ENCODE measurements at regions of chr22 and their contacts with region 1.

Region 1: DNA sequence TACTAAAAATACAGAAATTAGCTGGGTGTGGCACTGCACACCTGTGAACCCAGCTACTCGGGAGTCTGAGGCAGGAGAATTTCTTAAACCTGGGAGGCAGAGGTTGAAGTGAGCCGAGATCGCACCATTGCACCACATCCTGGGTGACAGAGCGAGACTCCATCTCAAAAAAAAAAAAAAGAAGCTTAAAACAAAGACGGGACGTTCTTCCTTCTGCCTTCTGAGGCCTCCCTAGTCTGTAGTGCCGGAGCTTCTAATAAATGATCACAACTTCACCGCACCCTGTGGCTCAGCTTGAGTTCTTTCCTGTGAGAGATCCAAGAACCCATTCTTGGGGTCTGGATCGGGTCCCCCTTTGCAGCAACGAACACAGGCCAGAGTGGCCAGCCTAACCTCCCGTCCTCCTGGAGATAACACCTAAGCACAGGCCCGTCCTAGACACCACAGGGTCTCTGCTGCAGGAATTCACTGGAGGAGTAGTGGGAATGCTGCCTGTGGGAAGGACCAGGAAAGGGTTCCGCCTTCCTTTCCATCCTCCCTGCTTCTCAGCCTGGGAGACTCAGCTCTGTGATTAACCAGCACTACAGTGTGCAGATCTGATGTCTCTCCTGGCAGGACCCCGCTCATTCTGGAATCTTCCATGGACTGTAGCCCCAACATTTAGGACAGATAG is 2.2 kb upstream of the APOBEC3H start:
- DNase-seq: peak in 4 of 5 donors; percentile 36 to 75 (median 60)
- H3K4me3 ChIP-seq: peak overlapping the region; percentile 42
- H3K4me3 Mint-ChIP-seq: peak overlapping the region; percentile 56 to 80 (median 69)
- H3K27ac ChIP-seq: peak overlapping the region; percentile 43
- H3K27ac Mint-ChIP-seq: peak overlapping the region; percentile 92 to 99 (median 96)
- H3K4me1 ChIP-seq: peaks cover 96% of the 10 kb centered on the region
- H3K4me1 Mint-ChIP-seq: peaks cover 87 to 99% (median 94%) of the 10 kb centered on the region in 3 donors
- H3K27me3 ChIP-seq: no peaks in the 10 kb centered on the region
- H3K27me3 Mint-ChIP-seq: peaks cover 0 to 5% of the 10 kb centered on the region in 2 donors

Region 2: DNA sequence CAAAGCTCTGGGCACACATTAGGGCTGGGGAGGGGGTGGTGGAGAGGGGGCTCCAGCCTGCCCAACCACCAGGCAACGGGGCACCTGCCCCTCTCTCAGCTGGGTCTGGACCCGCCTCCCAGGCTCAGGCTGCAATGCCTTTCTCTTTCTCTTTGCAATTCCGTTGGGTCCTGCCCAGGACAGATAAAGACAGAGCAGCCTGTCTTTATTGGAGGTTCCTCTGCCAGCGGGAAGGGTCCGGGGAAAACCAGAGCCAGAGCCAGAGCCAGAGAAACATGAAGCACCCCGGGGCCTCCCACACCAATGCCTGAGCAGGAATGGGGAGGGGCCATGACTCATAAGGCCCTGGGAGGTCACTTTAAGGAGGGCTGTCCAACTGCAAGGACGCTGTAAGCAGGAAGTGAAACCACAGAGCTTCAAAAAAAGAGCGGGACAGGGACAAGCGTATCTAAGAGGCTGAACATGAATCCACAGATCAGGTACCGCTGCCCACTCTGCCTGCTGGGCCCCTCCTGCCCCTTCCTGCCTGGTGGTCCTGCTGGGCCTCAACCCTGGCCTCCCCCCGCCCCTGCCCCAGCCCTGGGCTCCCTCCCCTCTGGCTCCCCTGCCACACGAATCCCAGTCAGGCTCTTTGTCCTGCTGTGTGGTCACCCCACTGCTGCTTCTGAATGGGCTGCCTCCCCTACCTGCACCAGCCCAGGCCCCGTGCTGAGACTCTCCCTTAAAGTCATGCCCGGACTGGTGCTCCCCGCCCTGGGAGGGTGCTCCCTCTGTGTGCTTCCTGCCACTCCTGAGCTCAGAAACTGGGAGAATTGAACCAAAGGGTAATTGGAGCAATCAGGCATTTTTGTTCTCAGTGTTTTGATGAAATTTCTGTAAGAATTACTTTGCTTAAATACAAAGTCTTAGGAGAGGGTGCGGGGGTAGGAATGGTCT is 112.6 kb before region 1 on chr22 and contains the start of gene APOBEC3B:
- CTCF ChIA-PET with region 1: no interaction called
- POLR2A ChIA-PET with region 1: no interaction called
- DNase-seq: peak; percentile 24 to 81 (median 58)
- H3K4me3 ChIP-seq: peak within 1 kb of the TSS; percentile 49
- H3K4me3 Mint-ChIP-seq: peak within 1 kb of the TSS; percentile 67 to 92 (median 87)
- H3K27ac ChIP-seq: no peak within 1 kb of the TSS
- H3K27ac Mint-ChIP-seq: peak within 1 kb of the TSS in 7 of 8 donors; percentile 36 to 92 (median 62)
- H3K4me1 ChIP-seq: peaks cover 19% of the 10 kb centered on the region
- H3K4me1 Mint-ChIP-seq: peaks cover 38 to 48% (median 44%) of the 10 kb centered on the region in 3 donors
- H3K27me3 ChIP-seq: no peaks in the 10 kb centered on the region
- H3K27me3 Mint-ChIP-seq: peaks cover 0 to 3% of the 10 kb centered on the region in 2 donors
- total RNA-seq, gene APOBEC3B: 6.7 to 7.3 TPM

Region 3: DNA sequence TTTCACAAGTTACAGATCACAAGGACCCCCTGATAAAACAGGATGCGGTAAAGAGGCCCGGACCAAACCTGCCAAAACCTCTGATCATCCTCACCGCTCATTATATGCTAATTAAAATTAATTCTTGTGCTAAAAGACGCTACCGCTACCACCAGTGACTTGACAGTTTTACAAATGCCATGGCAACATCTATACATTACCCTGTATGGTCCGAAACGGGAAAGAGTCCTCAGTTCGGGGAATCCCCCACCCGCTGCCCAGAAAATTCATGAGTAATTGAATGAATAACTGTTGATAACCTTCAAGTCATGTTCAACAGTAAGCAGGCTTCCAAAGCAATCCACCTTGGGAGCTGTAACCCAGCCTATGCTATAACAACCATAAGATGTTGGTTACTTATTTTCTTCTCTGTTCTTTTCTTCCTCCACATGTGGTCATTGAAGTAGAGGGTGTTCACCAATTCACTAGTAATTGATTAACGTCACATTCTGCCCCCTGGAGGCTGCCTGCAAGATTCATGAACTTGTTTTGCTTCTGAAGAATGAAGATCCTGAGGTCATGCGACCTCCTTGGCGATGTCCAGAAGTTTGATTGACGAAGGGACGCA is 22.8 kb after region 1 on chr22:
- CTCF ChIA-PET with region 1: interaction called, 10 read pairs
- POLR2A ChIA-PET with region 1: interaction called, 6 read pairs
- DNase-seq: peak; percentile 53 to 83 (median 60)
- H3K4me3 ChIP-seq: peak overlapping the region; percentile 30
- H3K4me3 Mint-ChIP-seq: peak overlapping the region; percentile 64 to 80 (median 76)
- H3K27ac ChIP-seq: peak overlapping the region; percentile 70
- H3K27ac Mint-ChIP-seq: peak overlapping the region; percentile 90 to 98 (median 93)
- H3K4me1 ChIP-seq: peaks cover 22% of the 10 kb centered on the region
- H3K4me1 Mint-ChIP-seq: peaks cover 45 to 64% (median 57%) of the 10 kb centered on the region in 3 donors
- H3K27me3 ChIP-seq: no peaks in the 10 kb centered on the region
- H3K27me3 Mint-ChIP-seq: no peaks in the 10 kb centered on the region